H1 (cell line): ENCODE measurements at regions of chr15 and their contacts with region 1.

Region 1: DNA sequence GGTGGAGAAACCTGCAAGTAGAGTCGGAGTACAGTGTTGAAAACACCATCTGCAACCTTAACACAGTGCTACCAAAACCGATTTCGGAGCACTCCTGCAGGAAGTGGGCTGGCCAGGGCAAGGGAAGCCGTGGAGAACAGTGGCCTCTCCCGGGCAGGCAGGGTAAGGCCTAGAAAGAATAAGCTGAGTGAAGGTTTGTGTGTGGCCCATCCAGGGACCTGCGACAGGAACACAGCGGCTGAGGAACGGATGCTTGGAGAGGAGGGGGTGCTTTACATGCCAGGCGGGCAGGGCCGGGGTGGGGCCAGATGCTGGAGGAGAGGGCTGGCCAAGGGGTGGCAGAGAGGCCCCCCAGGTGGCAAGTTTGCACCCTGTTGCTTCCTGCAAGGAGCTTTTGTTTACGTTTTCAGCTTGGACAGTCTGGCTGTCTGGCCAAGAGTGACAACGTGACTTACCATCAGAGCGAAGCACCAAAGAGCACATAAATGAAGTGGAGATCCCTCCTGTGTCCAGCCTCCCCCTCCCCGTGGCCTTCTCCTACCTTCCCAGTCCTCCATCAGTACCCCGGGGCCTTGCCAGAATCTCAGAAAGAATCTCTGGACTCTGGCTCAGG is 156.5 kb downstream of the PGPEP1L start:
- DNase-seq: peak; percentile 57 to 78
- H3K4me3 ChIP-seq: peak overlapping the region in 3 of 4 experiments; percentile 20 to 72 (median 69); a peak in 4 of 8 replicates
- H3K27ac ChIP-seq: no peak overlapping the region
- H3K4me1 ChIP-seq: peaks cover 20 to 38% (median 30%) of the 10 kb centered on the region in 4 experiments
- H3K27me3 ChIP-seq: no peaks in the 10 kb centered on the region
- CTCF ChIP-seq: peak; percentile 85 to 98 (median 93)
- EP300 ChIP-seq: no peak
- POLR2A ChIP-seq: no peak
- RAD21 ChIP-seq: peak; percentile 97

Region 2: DNA sequence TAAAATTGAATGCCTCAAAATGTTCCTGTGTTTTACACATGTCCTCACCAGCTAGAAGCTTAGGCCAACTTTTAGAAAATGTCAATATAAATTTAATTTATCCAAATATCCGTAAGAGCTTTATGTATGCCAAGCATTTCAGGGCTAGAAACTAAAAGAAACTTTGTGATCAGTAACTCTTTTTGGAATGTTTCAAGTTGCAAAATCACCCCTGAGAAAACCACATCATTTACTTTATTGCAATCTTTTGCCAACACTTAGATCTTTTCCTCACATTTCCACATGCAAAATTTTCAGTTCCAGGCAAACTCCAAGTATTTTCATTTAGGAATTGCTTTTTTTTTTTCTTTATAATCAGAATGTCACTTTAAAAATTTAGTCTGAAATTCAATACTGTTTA is 222.9 kb before region 1 on chr15:
- CTCF ChIA-PET with region 1: no interaction called
- POLR2A ChIA-PET with region 1: no interaction called
- DNase-seq: no peak
- H3K4me3 ChIP-seq: no peak overlapping the region
- H3K27ac ChIP-seq: no peak overlapping the region
- H3K4me1 ChIP-seq: no peaks in the 10 kb centered on the region
- H3K27me3 ChIP-seq: no peaks in the 10 kb centered on the region
- CTCF ChIP-seq: no peak
- EP300 ChIP-seq: no peak
- POLR2A ChIP-seq: no peak
- RAD21 ChIP-seq: no peak

Region 3: GRCh38 chr15:98647774-98648653 is 203.1 kb before region 1 on chr15 and contains the start of gene IGF1R:
- CTCF ChIA-PET with region 1: interaction called, 10 read pairs
- POLR2A ChIA-PET with region 1: interaction called, 3 read pairs
- DNase-seq: peak in 1 of 2 experiments; percentile 89
- H3K4me3 ChIP-seq: peak within 1 kb of the TSS; percentile 64 to 89 (median 83)
- H3K27ac ChIP-seq: peak within 1 kb of the TSS; percentile 85
- H3K4me1 ChIP-seq: peaks cover 1 to 6% (median 4%) of the 10 kb centered on the region in 4 experiments; a peak in 3 of 7 replicates
- H3K27me3 ChIP-seq: no peaks in the 10 kb centered on the region
- CTCF ChIP-seq: no peak
- EP300 ChIP-seq: no peak
- POLR2A ChIP-seq: no peak
- RAD21 ChIP-seq: no peak
- total RNA-seq, gene IGF1R: 106 and 109 TPM in 2 replicates

Region 4: GRCh38 chr15:98668566-98669308 is 182.3 kb before region 1 on chr15:
- CTCF ChIA-PET with region 1: interaction called, 13 read pairs
- POLR2A ChIA-PET with region 1: no interaction called
- DNase-seq: no peak
- H3K4me3 ChIP-seq: no peak overlapping the region
- H3K27ac ChIP-seq: no peak overlapping the region
- H3K4me1 ChIP-seq: peaks cover 28 to 48% (median 46%) of the 10 kb centered on the region in 4 experiments
- H3K27me3 ChIP-seq: no peaks in the 10 kb centered on the region
- CTCF ChIP-seq: no peak
- EP300 ChIP-seq: no peak
- POLR2A ChIP-seq: no peak
- RAD21 ChIP-seq: no peak

Region 5: DNA sequence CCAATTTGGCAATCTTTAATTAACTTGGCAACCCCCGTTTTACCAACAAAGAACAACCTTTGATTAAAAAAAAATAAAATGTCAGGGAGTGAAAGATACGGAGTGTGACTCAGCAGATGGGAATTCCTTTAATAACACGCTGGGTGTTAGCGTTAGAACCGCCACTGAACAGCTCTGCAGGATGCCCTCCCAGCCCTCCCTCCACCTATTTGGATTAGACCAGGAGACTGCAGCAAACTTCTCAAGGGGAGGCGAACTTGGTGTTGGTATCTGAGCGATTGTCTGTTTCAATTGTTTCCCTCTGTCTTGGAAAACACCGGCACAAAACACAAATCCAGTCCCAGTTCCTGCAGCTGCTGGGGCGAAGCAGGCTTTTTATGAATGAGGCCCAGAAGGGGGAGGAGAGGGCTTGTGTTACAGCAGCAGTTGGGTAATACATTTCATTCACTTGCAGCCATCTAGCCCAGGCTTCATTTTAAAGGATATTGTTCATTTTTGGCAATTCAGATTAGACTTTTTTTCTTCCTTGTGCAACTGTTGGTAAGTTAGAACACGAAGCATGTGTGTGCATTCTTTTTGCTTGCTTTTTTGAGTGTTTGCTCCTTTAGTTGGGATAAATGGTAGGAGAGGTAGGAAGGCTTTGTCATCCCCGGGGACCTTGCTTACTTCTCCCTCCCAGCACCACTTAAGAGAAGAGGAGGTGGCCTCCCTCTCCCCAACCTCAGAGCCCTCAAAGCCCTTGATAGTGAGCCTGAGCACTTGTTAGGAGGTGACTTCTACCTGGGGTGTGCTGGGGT is 50.4 kb before region 1 on chr15:
- CTCF ChIA-PET with region 1: interaction called, 30 read pairs
- POLR2A ChIA-PET with region 1: interaction called, 5 read pairs
- DNase-seq: peak in 1 of 2 experiments; percentile 74
- H3K4me3 ChIP-seq: peak overlapping the region; percentile 17 to 53 (median 24); a peak in 5 of 8 replicates
- H3K27ac ChIP-seq: peak overlapping the region; percentile 82
- H3K4me1 ChIP-seq: peaks cover 21 to 50% (median 44%) of the 10 kb centered on the region in 4 experiments
- H3K27me3 ChIP-seq: no peaks in the 10 kb centered on the region
- CTCF ChIP-seq: no peak
- EP300 ChIP-seq: 0 out of 3 replicates have a peak, but pooled peaks of 1 of the 2 experiments have one; percentile 30
- POLR2A ChIP-seq: no peak
- RAD21 ChIP-seq: no peak; a peak in 1 of 4 replicates

Region 6: GRCh38 chr15:98805434-98806274 is 45.4 kb before region 1 on chr15:
- CTCF ChIA-PET with region 1: interaction called, 30 read pairs
- POLR2A ChIA-PET with region 1: interaction called, 5 read pairs
- DNase-seq: no peak
- H3K4me3 ChIP-seq: no peak overlapping the region
- H3K27ac ChIP-seq: no peak overlapping the region
- H3K4me1 ChIP-seq: peaks cover 11 to 35% (median 21%) of the 10 kb centered on the region in 4 experiments
- H3K27me3 ChIP-seq: no peaks in the 10 kb centered on the region
- CTCF ChIP-seq: peak; percentile 13 to 30 (median 29); a peak in 3 of 4 replicates
- EP300 ChIP-seq: no peak
- POLR2A ChIP-seq: no peak
- RAD21 ChIP-seq: peak; percentile 22 to 36; a peak in 3 of 4 replicates

Region 7: GRCh38 chr15:98937413-98938104 is 86.5 kb after region 1 on chr15:
- CTCF ChIA-PET with region 1: no interaction called
- POLR2A ChIA-PET with region 1: no interaction called
- DNase-seq: no peak
- H3K4me3 ChIP-seq: no peak overlapping the region
- H3K27ac ChIP-seq: no peak overlapping the region
- H3K4me1 ChIP-seq: no peaks in the 10 kb centered on the region
- H3K27me3 ChIP-seq: no peaks in the 10 kb centered on the region
- CTCF ChIP-seq: no peak
- EP300 ChIP-seq: no peak
- POLR2A ChIP-seq: no peak
- RAD21 ChIP-seq: no peak

Region 8: DNA sequence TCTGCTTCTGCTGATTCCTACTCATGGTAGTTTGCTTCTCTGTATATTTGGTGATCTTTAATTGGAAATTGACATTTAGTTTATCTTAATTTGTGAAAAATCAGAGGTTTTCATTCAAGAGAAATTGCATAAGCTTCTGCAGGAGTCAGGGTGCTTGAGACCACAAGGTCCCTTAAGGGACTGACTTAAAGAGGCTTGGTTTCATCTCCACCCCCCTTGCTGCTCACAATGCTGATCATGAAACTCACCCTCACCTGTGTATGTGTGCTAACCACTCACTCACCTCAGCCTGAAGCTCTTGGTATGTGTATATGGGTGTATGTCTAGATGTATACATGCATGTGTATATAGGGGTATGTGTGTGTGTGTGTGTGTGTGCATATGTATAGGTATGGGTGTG is 145.1 kb after region 1 on chr15:
- CTCF ChIA-PET with region 1: no interaction called
- POLR2A ChIA-PET with region 1: no interaction called
- DNase-seq: no peak
- H3K4me3 ChIP-seq: no peak overlapping the region
- H3K27ac ChIP-seq: no peak overlapping the region
- H3K4me1 ChIP-seq: no peaks in the 10 kb centered on the region; a peak in 1 of 7 replicates
- H3K27me3 ChIP-seq: no peaks in the 10 kb centered on the region
- CTCF ChIP-seq: no peak
- EP300 ChIP-seq: no peak
- POLR2A ChIP-seq: no peak
- RAD21 ChIP-seq: no peak

Region 9: DNA sequence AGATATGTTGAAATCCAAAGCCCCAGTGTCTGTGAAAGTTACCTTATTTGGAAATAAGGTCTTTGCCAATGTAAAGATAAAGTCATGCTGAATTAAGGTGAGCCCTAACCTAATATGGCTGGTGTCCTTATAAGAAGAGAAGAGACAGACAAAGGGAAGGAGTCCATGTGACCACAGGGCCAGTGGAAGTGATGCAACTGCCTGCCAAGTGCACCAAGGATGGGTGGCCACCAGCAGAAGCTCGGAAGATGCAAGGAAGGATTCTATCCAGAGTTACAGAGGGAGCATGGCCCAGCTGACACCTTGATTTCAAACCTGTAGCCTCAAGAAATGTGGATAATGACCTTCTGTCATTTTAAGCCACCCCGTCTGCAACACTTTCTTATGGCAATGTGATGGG is 191.8 kb after region 1 on chr15:
- CTCF ChIA-PET with region 1: no interaction called
- POLR2A ChIA-PET with region 1: no interaction called
- DNase-seq: no peak
- H3K4me3 ChIP-seq: no peak overlapping the region
- H3K27ac ChIP-seq: no peak overlapping the region
- H3K4me1 ChIP-seq: no peaks in the 10 kb centered on the region
- H3K27me3 ChIP-seq: no peaks in the 10 kb centered on the region
- CTCF ChIP-seq: no peak
- EP300 ChIP-seq: no peak
- POLR2A ChIP-seq: no peak
- RAD21 ChIP-seq: no peak